ENCODE measurements at regions of chr2 and their contacts with region 1.

Region 1: DNA sequence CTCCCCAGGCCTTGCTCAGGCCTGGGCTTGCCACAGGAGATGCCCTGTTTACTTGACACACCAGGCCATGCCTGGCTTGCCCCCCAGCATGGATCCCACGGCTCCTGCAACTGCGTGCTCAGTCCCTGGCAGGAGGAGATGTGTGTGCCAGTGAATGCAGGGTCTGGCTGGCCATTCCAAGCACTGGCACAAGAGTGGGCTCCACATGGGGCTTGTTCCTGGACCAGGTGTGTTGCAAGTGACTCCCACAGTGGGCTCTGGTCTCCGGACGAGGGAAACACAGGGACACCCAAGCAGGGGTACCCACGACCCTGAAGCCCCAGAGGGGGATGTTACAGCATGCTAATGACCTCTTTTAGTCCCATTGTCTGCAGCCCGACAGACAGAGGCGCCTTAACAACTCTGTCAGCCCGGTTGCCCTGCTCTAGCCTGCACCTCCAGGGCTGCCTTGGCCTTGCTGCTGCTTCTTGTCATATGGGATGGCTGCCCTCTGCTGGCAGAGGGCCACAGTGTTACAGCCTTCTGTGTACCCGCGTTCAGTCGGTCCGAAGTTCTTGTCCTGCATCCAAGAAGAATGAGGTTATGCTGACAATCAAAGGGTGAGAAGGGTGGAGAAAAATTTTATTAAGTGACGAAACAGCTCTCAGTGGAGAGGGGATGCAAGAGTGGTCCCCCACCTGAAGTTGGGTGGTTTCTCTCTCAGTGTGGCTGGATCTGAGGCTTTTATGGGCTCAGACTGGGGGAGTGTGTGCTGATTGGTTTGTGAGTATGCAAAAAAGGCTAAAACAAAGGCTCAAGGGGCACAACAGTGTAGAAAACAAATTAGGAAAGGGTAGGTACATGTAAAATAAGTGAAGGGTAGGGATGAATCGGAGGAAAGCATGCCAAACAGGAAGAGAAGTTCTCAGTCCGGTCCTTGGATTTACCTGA is 180.4 kb downstream of the MBD5 start:
- DNase-seq: peak; percentile 32
- H3K4me3 ChIP-seq: no peak overlapping the region
- H3K27ac ChIP-seq: no peak overlapping the region
- H3K4me1 ChIP-seq: no peaks in the 10 kb centered on the region
- H3K27me3 ChIP-seq: no peaks in the 10 kb centered on the region
- CTCF ChIP-seq: peak in 4 of 5 experiments; percentile 29 to 39 (median 37)
- EP300 ChIP-seq: no peak
- POLR2A ChIP-seq: no peak

Region 2: DNA sequence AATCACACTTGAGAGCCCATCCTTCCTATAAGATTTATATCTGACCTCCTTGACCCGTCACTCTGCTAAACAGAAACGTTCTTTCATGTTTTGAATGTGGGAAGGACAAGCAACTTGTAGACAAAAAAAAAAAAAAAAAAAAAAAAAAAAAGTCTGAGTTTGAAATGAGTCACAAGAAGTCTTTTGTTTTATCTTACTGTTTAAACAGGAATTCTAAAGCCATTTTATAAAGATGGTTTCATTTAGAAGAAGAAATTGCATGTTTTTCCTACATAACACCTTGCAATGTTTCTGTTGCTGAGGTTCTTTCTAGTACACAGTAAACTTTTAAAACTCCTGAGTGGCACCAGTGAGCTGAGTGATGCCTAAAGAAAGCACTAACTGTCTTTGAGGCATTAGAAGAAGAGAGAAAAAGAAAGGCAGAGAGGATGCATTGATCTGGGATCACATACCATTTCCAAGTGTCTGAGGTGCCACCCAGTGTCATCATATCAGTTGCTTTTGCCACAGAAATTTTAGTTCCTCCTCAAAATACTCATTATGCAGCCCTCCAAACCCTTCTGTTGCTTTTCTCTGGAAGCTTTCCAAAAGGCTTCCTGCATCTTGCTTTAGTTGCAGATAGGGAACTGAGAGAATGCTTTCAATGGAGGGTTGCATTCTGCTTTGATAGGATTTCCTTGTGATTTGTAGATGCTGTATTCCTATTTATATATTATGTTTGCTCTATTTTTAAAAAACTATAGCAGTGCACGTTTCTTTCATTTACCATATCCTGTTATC is 287.4 kb before region 1 on chr2:
- in situ Hi-C with region 1: no loop called
- intact Hi-C with region 1: no loop called
- DNase-seq: no peak
- H3K4me3 ChIP-seq: no peak overlapping the region
- H3K27ac ChIP-seq: no peak overlapping the region
- H3K4me1 ChIP-seq: peaks cover 0 to 27% (median 5%) of the 10 kb centered on the region in 4 donors
- H3K27me3 ChIP-seq: no peaks in the 10 kb centered on the region
- CTCF ChIP-seq: no peak
- EP300 ChIP-seq: no peak
- POLR2A ChIP-seq: no peak

Region 3: DNA sequence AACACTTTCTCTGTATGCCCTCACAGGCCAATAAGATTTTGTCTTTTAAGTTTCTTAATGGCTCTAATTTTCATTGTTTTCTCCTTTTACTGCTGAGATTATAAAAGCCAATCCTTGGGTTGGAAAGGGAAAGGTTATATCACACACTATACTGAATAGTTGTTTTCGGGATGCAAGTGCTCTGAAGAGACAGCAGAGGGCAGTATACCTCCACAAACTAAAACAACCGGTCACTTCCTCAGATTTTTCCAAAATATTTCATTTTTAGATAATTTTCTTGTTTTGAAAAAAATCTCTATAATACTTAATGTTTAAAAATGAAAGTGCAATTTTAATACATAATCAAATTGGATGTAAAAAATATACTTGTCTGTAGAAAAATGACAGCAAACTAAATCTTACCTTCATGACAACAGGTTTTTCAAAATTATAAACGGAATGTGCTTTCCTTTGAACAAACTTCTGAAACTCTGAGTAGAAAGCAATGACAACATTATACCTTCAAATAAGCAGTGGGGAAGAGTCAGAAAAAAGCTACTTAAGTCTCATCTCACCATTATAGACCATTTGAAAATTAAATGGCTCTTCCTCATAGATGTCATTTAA is 263.5 kb before region 1 on chr2:
- in situ Hi-C with region 1: no loop called
- intact Hi-C with region 1: loop called (anchors 5 kb)
- DNase-seq: no peak
- H3K4me3 ChIP-seq: no peak overlapping the region
- H3K27ac ChIP-seq: no peak overlapping the region
- H3K4me1 ChIP-seq: peaks cover 0 to 13% (median 3%) of the 10 kb centered on the region in 4 donors
- H3K27me3 ChIP-seq: no peaks in the 10 kb centered on the region
- CTCF ChIP-seq: peak; percentile 77 to 88 (median 83)
- EP300 ChIP-seq: no peak
- POLR2A ChIP-seq: no peak

Region 4: DNA sequence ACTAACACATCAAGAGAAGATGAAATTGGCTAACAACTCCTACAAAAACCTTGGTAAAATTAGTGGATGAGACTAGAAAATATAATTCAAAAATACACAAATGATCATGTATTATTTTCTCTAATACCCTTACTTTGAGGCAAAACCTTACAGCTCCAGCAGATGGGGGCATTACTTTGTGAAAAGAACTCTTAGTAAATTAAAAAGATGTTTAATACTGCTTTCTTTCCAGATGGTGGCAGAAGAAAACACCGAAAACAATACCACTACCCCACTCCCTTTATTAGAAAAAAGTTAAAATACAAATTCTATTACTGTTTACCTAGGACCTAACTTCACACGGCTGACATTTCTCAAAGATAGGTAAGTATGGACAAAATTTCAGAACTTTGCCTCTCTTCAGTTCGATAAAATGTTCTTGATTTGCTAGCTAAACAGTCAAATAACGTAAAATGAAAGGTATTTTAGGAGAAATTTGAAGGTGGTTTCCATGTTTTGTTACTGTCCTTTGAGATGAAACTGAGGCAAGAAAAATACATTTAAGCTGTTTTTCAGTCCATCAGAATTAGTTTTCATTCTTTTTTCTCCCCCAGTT is 211.4 kb before region 1 on chr2:
- in situ Hi-C with region 1: loop called in 1 of 4 experiments (anchors 10 kb)
- intact Hi-C with region 1: no loop called
- DNase-seq: no peak
- H3K4me3 ChIP-seq: no peak overlapping the region
- H3K27ac ChIP-seq: no peak overlapping the region
- H3K4me1 ChIP-seq: no peaks in the 10 kb centered on the region
- H3K27me3 ChIP-seq: no peaks in the 10 kb centered on the region
- CTCF ChIP-seq: peak; percentile 44 to 59 (median 46)
- EP300 ChIP-seq: no peak
- POLR2A ChIP-seq: no peak

Region 5: DNA sequence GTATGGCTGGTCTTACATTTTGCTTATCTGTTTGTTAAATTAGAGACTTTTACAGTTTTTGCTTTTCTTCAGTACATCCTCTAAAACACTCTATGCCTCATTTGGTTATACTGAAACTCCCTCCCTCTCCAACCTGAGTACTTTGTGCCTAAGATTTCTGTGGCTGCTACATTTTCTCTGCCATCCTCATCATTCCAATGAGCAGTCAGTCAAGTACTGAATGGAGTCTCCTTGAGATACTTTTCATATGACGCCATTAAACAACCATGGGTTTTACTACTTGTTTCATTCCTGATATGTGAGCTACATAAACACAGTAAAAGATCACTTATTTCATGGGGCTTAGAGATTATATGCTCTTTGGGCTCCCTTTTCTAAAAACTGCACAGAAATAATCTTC is 246.5 kb after region 1 on chr2:
- in situ Hi-C with region 1: no loop called
- intact Hi-C with region 1: no loop called
- DNase-seq: no peak
- H3K4me3 ChIP-seq: no peak overlapping the region
- H3K27ac ChIP-seq: no peak overlapping the region
- H3K4me1 ChIP-seq: no peaks in the 10 kb centered on the region
- H3K27me3 ChIP-seq: no peaks in the 10 kb centered on the region
- CTCF ChIP-seq: no peak
- EP300 ChIP-seq: no peak
- POLR2A ChIP-seq: no peak